RWPE1 (cell line): ENCODE measurements at regions of chr7 and their contacts with region 1.

Region 1: DNA sequence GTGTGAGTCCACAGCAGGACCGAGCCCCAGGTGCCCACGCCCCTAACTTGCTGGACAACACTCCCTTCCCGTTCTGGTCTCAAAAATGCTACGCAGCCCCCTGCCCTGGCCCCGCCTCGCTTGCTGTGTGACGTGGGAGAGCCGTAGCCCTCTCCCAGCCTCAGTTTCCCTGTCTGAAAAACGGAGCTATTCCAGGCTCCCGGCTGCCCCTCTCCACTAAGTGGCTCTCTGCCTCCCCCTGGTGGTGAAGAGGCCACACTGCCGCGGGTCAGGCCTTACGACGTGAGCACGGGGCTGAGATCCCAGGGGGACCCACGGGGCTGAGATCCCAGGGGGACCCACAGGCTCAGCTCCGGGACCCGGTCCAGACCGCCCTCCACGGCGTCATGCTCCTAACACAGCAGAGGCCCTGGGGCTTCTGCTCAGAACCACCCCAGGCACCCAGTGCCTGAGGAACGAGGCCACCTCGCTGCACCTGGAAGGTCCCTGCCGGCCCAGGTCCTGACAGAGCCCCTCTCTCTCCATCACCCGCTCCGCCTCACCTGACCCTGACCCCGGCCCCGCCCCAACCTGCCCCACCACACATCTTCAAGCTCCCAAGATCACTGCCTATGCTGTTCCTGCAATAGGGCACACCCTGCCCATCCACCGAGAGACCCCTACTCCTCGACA is 26.7 kb downstream of the MICALL2 start:
- DNase-seq: peak; percentile 69
- H3K27ac ChIP-seq: no peak overlapping the region
- CTCF ChIP-seq: peak; percentile 99

Region 2: GRCh38 chr7:1193593-1194424 is 238.7 kb before region 1 on chr7:
- CTCF ChIA-PET with region 1: interaction called, 15 read pairs
- POLR2A ChIA-PET with region 1: no interaction called
- DNase-seq: peak; percentile 72
- H3K27ac ChIP-seq: no peak overlapping the region
- CTCF ChIP-seq: peak; percentile 79

Region 3: GRCh38 chr7:1452205-1452604 is 19.7 kb after region 1 on chr7:
- CTCF ChIA-PET with region 1: interaction called, 12 read pairs
- POLR2A ChIA-PET with region 1: no interaction called
- DNase-seq: peak; percentile 51
- H3K27ac ChIP-seq: peak overlapping the region; percentile 94
- CTCF ChIP-seq: no peak

Region 4: DNA sequence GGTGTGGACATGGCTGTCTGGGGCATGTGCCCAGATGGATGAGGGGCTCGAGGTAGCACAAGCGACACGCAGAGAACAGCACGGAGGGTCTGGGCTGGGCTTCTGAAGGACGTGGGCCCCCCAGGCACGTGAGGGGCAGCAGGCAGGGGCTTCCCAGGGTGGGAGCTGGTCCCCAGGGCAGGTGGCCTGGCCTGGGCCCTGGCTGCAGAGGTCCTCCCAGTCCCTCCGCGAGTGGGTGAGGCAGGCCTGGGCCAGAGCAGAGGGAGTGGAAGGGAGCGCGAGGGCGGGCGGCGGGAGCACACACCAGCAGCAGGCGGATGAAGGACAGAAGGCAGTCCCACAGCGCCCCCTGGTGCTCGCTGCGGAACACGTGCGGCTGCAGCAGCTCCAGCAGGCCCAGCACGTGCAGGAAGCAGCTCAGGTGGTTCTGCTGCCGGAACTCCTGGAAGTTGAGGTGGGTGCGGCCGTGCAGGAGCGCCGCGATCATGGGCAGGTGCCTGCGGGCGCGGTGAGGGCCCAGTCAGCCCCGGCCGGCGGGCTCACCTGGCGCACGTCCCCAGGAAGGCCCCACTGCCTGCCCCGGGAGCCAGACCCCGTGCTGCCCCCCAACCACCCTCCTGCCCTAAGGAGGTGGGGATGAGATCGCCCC is 41.4 kb after region 1 on chr7:
- CTCF ChIA-PET with region 1: interaction called, 15 read pairs
- POLR2A ChIA-PET with region 1: no interaction called
- DNase-seq: peak; percentile 88
- H3K27ac ChIP-seq: peak overlapping the region; percentile 59
- CTCF ChIP-seq: peak; percentile 97

Region 5: GRCh38 chr7:1526251-1526763 is 93.8 kb after region 1 on chr7:
- CTCF ChIA-PET with region 1: no interaction called
- POLR2A ChIA-PET with region 1: no interaction called
- DNase-seq: no peak
- H3K27ac ChIP-seq: no peak overlapping the region
- CTCF ChIP-seq: no peak